ENCODE measurements at regions of chr2 and their contacts with region 1.

Region 1: DNA sequence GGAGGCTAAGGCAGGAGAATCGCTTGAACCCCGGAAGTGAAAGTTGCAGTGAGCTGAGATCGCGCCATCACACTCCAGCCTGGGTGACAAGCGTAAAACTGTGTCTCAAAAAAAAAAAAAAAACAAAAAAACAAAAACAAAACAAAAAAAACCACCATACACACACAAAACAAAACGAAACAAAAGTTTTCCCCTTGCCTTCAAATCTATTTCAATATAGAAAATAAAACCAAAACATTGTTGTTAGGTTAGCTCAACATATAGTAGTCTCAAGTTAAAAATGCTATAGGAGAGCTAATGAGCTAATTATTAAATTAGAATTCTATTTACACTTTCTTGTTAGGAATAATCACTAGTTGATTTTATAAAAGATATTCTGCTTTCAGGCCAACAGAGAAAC is 43.3 kb downstream of the FBXO11 start:
- DNase-seq: no peak
- ATAC-seq: no peak
- H3K4me3 ChIP-seq: no peak overlapping the region
- H3K27ac ChIP-seq: no peak overlapping the region
- H3K4me1 ChIP-seq: peaks cover 4% of the 10 kb centered on the region; the same call in 1 of the 2 replicates
- H3K27me3 ChIP-seq: no peaks in the 10 kb centered on the region
- CTCF ChIP-seq: no peak
- POLR2A ChIP-seq: no peak
- RAD21 ChIP-seq: no peak

Region 2: DNA sequence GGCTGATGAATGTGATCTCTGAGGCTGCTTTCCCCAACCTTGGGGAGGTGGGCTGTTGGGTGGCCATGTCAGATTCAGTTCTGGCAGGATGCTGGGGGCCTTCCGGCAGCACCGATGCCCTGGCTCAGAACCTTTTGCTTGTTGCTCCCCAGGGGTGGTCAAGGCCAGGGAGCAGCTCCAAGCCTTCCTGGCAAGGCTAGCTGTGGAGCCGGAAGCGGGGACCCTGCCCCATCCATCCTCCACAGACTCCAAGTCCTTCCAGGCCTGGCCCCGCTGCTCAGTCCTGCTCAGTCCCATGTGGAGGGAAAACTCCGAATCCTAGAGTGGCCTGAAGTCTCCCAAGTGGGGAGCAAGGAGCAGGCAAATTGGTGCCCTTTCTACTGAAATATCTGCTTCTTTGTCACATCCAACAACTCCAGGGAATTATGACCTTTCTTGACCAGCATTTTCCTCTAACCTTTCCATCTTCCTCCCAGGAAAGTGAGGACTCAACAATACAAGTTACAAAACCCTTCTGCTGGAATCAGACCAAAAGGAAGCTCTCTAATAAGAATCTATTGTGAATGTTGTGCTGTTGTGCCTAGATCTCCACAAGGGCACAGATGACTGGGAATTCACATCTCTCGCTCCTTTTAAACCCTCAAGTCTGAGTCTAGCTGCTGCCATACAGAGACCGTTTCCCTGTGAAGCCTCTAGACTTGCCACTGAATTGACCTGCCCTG is 1081.3 kb before region 1 on chr2:
- CTCF ChIA-PET with region 1: no interaction called
- POLR2A ChIA-PET with region 1: no interaction called
- dilution Hi-C with region 1: no loop called
- in situ Hi-C with region 1: no loop called
- intact Hi-C with region 1: no loop called
- DNase-seq: no peak
- ATAC-seq: no peak
- H3K4me3 ChIP-seq: no peak overlapping the region
- H3K27ac ChIP-seq: peak overlapping the region; percentile 9; the same call in 1 of the 2 replicates
- H3K4me1 ChIP-seq: peaks cover 26% of the 10 kb centered on the region
- H3K27me3 ChIP-seq: no peaks in the 10 kb centered on the region
- CTCF ChIP-seq: no peak
- POLR2A ChIP-seq: no peak
- RAD21 ChIP-seq: no peak

Region 3: DNA sequence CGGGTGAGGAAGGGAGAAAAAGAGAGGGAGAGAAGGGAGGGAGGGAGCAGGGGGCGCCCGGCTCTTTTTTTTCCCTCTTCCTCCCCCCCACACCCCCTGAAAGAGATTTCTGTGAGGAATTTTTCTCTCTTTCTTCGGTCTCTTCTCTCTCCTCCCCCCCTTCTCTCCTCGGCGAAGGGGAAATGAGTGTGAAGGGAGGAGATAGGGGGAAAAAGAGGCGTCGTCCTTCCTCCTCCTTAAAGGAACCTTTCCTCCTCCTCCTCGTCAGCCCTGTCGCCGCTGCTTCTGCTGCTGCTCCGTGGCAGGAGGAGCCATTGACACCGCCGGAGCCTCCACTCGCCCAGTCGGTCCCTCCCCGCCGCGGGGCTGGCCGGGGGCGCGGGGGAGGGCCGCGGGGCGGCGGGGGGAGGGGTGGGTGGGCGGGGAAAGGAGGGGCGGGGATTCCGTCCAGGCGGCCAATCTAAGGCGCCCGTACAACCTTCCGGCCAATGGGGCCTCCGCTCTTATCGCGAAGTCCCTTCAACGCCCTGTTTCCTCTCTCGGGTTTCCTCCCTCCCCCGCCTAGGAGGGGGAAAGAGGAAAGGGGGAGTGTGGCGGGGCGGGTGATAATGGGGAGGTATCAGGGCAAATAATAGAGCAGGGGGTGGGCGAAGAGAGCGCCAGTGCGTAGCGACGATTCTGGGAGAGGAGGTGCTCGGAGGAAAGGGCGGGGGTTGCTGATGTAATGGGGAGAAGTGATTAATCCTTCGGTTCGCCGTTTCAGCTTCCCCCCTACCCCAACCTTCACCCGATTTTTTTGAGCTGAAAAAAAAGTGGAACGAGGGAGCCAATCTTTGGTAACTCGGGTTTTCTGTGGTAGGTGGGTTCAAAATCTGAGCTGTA is 43.4 kb after region 1 on chr2 and contains the start of gene FBXO11:
- CTCF ChIA-PET with region 1: no interaction called
- POLR2A ChIA-PET with region 1: no interaction called
- dilution Hi-C with region 1: no loop called
- in situ Hi-C with region 1: no loop called
- intact Hi-C with region 1: loop called (anchors 5 kb)
- DNase-seq: peak; percentile 98
- ATAC-seq: peak; percentile 88
- H3K4me3 ChIP-seq: peak within 1 kb of the TSS; percentile 96
- H3K27ac ChIP-seq: peak within 1 kb of the TSS; percentile 86
- H3K4me1 ChIP-seq: no peaks in the 10 kb centered on the region
- H3K27me3 ChIP-seq: no peaks in the 10 kb centered on the region
- CTCF ChIP-seq: no peak; the same call in none of the 2 replicates
- POLR2A ChIP-seq: peak; percentile 98
- RAD21 ChIP-seq: no peak
- total RNA-seq, gene FBXO11: 27.1 and 32.2 TPM in 2 replicates

Region 4: GRCh38 chr2:48515513-48515985 is 652.6 kb after region 1 on chr2:
- CTCF ChIA-PET with region 1: no interaction called
- POLR2A ChIA-PET with region 1: no interaction called
- dilution Hi-C with region 1: no loop called
- in situ Hi-C with region 1: no loop called
- intact Hi-C with region 1: no loop called
- DNase-seq: no peak
- ATAC-seq: peak; percentile 68
- H3K4me3 ChIP-seq: no peak overlapping the region
- H3K27ac ChIP-seq: no peak overlapping the region
- H3K4me1 ChIP-seq: peaks cover 5% of the 10 kb centered on the region
- H3K27me3 ChIP-seq: no peaks in the 10 kb centered on the region
- CTCF ChIP-seq: no peak
- POLR2A ChIP-seq: no peak
- RAD21 ChIP-seq: no peak

Measured in IMR-90 (cell line).